ENCODE measurements at regions of chr10 and their contacts with region 1.

Region 1: GRCh38 chr10:84613336-84614021 is 285.1 kb downstream of the CCSER2 start:
- DNase-seq: no peak
- H3K4me3 ChIP-seq: no peak overlapping the region
- H3K27ac ChIP-seq: no peak overlapping the region
- H3K4me1 ChIP-seq: no peaks in the 10 kb centered on the region
- H3K27me3 ChIP-seq: peaks cover 0 to 11% (median 0%) of the 10 kb centered on the region in 4 donors
- CTCF ChIP-seq: peak in 2 of 3 experiments; percentile 2 to 7
- EP300 ChIP-seq: no peak
- POLR2A ChIP-seq: no peak

Region 2: DNA sequence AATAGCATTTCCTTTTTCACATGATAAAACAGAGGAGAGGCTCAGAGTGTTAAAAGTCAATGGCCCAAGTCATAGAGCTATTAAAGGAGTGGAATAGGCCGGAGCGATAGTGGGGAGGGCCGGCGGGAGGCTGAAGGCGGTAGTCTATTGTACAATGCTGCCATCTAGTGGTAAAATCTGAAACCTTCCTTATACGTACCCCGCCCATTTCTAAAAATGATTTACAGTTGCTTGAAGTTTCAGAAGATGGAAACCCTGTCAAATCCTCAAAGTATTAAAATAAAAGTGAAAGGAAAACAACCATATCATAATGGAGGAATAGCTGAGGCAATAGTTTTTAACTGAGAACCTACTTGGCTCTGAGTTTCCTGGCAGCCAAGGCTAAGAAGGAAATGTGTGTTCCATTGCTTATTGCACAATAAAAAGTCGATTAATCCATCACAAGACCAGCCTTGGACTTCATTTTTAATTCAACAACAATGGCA is 76.0 kb before region 1 on chr10:
- intact Hi-C with region 1: no loop called
- DNase-seq: no peak
- H3K4me3 ChIP-seq: no peak overlapping the region
- H3K27ac ChIP-seq: no peak overlapping the region
- H3K4me1 ChIP-seq: peaks cover 0 to 12% (median 11%) of the 10 kb centered on the region in 4 donors
- H3K27me3 ChIP-seq: peaks cover 0 to 37% (median 2%) of the 10 kb centered on the region in 4 donors
- CTCF ChIP-seq: peak; percentile 83 to 91 (median 83)
- EP300 ChIP-seq: no peak
- POLR2A ChIP-seq: no peak

Region 3: GRCh38 chr10:84599254-84599653 is 14.2 kb before region 1 on chr10:
- intact Hi-C with region 1: loop called (anchors 2 kb)
- DNase-seq: no peak
- H3K4me3 ChIP-seq: no peak overlapping the region
- H3K27ac ChIP-seq: no peak overlapping the region
- H3K4me1 ChIP-seq: no peaks in the 10 kb centered on the region
- H3K27me3 ChIP-seq: peaks cover 0 to 26% (median 0%) of the 10 kb centered on the region in 4 donors
- CTCF ChIP-seq: no peak
- EP300 ChIP-seq: no peak
- POLR2A ChIP-seq: no peak

Region 4: GRCh38 chr10:84676536-84676935 is 63.1 kb after region 1 on chr10:
- intact Hi-C with region 1: no loop called
- DNase-seq: no peak
- H3K4me3 ChIP-seq: no peak overlapping the region
- H3K27ac ChIP-seq: no peak overlapping the region
- H3K4me1 ChIP-seq: no peaks in the 10 kb centered on the region
- H3K27me3 ChIP-seq: no peaks in the 10 kb centered on the region
- CTCF ChIP-seq: no peak
- EP300 ChIP-seq: no peak
- POLR2A ChIP-seq: no peak

Measured in esophagus muscularis mucosa (tissue), 4 donors.